Right cardiac atrium (tissue), 5 donors: ENCODE measurements at regions of chr1 and their contacts with region 1.

Region 1: GRCh38 chr1:116418091-116418830 is 45.2 kb downstream of the ATP1A1 start:
- DNase-seq: peak; percentile 86 to 94 (median 93)
- ATAC-seq: peak; percentile 89 to 90
- H3K4me3 ChIP-seq: peak overlapping the region; percentile 49
- H3K27ac ChIP-seq: peak overlapping the region; percentile 75
- H3K4me1 ChIP-seq: peaks cover 7% of the 10 kb centered on the region
- H3K27me3 ChIP-seq: no peaks in the 10 kb centered on the region

Region 2: DNA sequence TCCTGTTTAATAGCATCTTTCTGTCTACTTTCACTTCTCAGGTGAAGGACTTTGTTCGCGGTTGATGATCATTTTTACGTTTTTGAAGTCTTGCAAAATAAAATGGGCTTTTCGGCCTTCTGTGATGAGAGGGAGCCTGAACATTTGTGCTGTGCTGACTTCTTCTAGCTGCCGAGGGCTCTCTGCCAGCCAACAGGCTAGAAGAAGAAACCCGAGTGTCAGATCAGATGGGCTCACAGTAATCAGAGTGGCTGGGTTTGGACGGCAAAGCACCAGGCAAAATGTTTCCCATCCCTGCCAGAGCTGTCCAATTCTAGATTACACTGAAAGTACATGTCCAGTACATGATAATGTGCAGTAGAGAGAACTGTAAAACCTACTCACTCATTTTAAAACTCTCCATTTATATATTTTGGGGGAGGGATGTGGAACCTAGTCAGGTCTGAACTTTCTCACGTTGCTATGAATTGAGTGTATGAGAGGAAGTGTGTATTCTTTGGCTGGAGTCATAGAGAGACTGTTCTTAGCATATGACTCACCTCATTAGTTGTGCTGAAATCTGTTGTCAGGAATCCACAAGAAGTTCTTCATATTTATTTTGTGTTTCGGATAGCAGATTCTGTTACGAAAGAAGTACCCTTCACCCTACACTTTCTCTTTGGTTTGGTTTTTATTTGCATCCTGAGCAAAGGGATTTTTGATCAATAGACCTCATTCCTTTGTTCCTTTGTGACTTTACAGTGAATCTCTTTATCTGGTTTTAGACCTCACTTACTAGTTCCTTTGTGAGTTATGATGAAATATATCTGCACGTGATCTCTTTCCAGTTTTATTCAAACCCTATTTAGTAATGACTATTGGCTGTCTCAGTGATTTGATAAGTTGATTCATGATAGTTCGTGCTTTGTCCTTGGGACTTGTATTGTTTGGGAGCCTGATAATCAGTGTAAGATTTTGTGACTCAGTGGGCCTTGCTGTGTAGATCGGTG is 40.4 kb before region 1 on chr1:
- intact Hi-C with region 1: loop called in 1 of 4 experiments (anchors 5 kb)
- DNase-seq: peak; percentile 82 to 94 (median 86)
- ATAC-seq: peak; percentile 47 to 49
- H3K4me3 ChIP-seq: no peak overlapping the region
- H3K27ac ChIP-seq: peak overlapping the region; percentile 98
- H3K4me1 ChIP-seq: peaks cover 28% of the 10 kb centered on the region
- H3K27me3 ChIP-seq: no peaks in the 10 kb centered on the region

Region 3: DNA sequence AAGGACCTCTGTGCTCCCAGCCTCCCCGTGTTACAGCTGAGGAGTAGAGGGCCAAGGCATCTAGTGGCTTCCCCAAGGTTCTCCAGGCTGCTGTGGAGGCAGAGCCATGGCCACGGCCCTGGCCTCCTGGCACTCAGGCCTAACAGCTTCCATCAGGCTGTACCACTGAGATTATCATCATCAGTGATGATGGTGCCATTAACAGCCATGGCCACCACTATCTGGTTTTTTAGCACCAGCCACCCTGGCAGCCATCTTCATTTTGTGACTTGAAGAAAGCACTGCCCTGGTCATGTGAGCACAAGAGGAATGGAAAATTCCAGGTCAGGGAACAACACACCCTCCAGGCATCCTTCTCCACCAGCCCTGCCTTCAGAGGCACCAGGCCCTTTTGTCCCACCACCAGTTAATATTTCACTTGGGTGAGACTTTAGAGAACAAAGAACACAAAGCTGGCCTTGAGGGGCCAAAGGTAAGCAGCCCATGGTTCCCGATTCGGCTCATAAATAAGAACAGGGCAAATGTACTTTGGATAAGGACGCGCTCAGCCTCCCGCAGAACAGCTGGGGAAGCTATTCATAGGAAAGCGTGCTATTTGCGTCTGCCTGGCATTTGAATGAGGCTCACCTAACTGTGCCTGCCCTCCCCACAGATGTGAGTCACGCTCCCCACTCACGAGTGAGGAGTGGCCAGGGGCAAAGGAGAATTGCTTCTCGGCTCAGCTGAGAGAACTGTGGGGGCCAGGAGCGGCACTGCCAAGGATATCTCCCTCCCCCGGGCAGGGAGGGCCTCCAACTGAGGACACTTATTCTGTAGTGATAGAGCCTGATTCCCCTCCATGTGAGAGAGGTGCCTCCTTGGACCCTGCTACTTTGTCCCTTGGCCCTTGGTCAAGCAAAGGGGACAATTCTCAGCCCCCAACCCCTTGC is 56.9 kb after region 1 on chr1:
- intact Hi-C with region 1: loop called in 1 of 4 experiments (anchors 5 kb)
- DNase-seq: peak; percentile 49 to 70 (median 60)
- ATAC-seq: peak; percentile 62 to 82
- H3K4me3 ChIP-seq: no peak overlapping the region
- H3K27ac ChIP-seq: peak overlapping the region; percentile 94
- H3K4me1 ChIP-seq: peaks cover 15% of the 10 kb centered on the region
- H3K27me3 ChIP-seq: no peaks in the 10 kb centered on the region